Endothelial cell of umbilical vein (primary cell): ENCODE measurements at regions of chr3 and their contacts with region 1.

Region 1: DNA sequence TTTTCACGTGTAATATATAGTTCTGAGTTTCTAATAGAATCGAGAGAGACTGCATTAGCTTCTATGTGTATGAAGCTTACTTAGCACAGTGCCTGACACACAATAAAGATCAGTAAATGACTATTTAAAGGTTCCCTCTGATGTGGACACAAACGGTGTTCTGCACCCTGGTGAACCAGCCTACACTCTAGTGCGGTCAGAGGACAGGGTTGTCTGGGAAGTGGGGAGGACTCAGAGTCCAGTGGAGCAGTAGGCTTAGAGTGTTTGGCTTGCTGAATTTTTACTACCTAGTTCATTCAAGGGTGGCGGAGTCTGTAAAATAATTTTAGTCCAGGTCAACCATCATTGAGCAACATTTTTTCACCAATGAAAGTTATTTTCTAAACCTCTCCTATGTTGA is 77.8 kb downstream of the DIPK2A start:
- DNase-seq: no peak
- H3K4me3 ChIP-seq: no peak overlapping the region
- H3K27ac ChIP-seq: no peak overlapping the region
- H3K4me1 ChIP-seq: no peaks in the 10 kb centered on the region
- H3K27me3 ChIP-seq: no peaks in the 10 kb centered on the region
- CTCF ChIP-seq: no peak
- POLR2A ChIP-seq: no peak

Region 2: DNA sequence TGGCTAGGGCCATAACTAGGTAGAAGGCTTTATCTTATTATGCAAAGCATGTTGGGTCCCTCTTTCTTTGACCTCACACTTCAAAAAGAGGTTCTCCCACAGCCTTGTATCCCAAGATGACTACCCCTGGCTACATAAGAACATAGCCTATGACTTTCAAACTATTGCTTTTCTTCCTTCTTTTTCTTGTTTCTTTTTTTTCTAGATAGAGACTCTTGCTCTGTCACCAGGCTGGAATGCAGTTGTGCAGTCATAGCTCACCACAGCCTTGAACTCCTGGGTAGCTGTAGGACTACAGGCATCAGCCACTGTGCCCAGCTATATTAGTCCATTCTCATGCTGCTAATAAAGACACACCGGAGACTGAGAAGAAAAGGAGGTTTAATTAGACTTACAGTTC is 30.6 kb before region 1 on chr3:
- CTCF ChIA-PET with region 1: no interaction called
- POLR2A ChIA-PET with region 1: no interaction called
- dilution Hi-C with region 1: no loop called
- intact Hi-C with region 1: no loop called
- DNase-seq: no peak
- H3K4me3 ChIP-seq: no peak overlapping the region
- H3K27ac ChIP-seq: no peak overlapping the region
- H3K4me1 ChIP-seq: no peaks in the 10 kb centered on the region
- H3K27me3 ChIP-seq: no peaks in the 10 kb centered on the region
- CTCF ChIP-seq: no peak
- POLR2A ChIP-seq: no peak

Region 3: GRCh38 chr3:144033863-144034262 is 15.5 kb before region 1 on chr3:
- CTCF ChIA-PET with region 1: interaction called, 8 read pairs
- POLR2A ChIA-PET with region 1: no interaction called
- dilution Hi-C with region 1: no loop called
- intact Hi-C with region 1: loop called (anchors 2 kb)
- DNase-seq: no peak
- H3K4me3 ChIP-seq: no peak overlapping the region
- H3K27ac ChIP-seq: no peak overlapping the region
- H3K4me1 ChIP-seq: no peaks in the 10 kb centered on the region
- H3K27me3 ChIP-seq: no peaks in the 10 kb centered on the region
- CTCF ChIP-seq: no peak
- POLR2A ChIP-seq: no peak